ENCODE measurements at regions of chr2 and their contacts with region 1.

Region 1: GRCh38 chr2:166180951-166181812 is 53.4 kb upstream of the SCN1A start:
- DNase-seq: no peak
- H3K4me3 ChIP-seq: no peak overlapping the region
- H3K27me3 ChIP-seq: no peaks in the 10 kb centered on the region
- CTCF ChIP-seq: peak; percentile 70

Region 2: DNA sequence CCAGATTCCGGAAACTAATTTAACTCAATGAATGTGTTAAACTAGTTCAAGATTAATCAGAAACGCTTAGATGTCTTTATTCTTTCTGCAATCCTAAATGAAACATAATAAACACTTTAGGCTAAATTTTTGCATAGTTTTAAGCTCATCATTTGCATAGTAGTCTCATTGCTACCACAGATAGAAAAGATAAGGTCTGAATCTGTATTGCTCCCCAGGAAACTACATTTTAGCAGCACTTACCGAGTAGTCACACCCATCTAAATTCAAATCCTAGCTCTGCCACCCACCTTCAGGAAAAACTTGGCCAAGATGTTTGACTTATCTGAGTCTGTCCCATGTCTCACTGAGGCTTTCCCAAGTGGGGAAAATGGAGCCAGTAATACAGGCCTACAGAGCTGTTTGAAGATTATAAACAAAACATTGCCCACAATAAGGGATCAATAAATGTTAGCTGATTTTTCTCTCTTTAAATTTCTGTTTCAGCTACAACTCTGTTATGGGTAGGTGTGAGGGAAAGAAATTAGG is 474.2 kb before region 1 on chr2:
- CTCF ChIA-PET with region 1: no interaction called
- POLR2A ChIA-PET with region 1: no interaction called
- DNase-seq: no peak
- H3K4me3 ChIP-seq: no peak overlapping the region
- H3K27me3 ChIP-seq: no peaks in the 10 kb centered on the region
- CTCF ChIP-seq: no peak

Region 3: GRCh38 chr2:166193407-166193806 is 12.2 kb after region 1 on chr2:
- CTCF ChIA-PET with region 1: interaction called, 27 read pairs
- POLR2A ChIA-PET with region 1: no interaction called
- DNase-seq: no peak
- H3K4me3 ChIP-seq: no peak overlapping the region
- H3K27me3 ChIP-seq: no peaks in the 10 kb centered on the region
- CTCF ChIP-seq: no peak

Region 4: GRCh38 chr2:166384774-166385173 is 203.6 kb after region 1 on chr2:
- CTCF ChIA-PET with region 1: interaction called, 33 read pairs
- POLR2A ChIA-PET with region 1: no interaction called
- DNase-seq: no peak
- H3K4me3 ChIP-seq: no peak overlapping the region
- H3K27me3 ChIP-seq: no peaks in the 10 kb centered on the region
- CTCF ChIP-seq: peak; percentile 39

Region 5: DNA sequence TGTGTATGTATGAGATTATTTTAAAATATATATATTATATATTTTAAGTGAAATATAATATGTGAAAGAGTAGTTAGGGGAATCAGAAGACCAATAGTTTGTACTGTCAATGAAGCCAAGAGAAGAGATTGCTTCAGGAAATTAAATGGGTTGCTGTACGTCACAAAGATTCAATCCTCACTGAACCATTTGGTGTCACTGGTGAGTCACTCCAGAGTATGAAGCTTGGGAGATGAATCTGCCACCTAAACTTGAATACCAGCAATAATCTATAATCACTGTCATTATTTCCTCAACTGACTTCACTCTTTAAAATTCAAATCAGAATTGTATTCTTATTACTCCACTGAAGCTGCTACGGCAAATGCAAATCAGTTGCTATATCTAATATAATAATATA is 236.5 kb after region 1 on chr2:
- CTCF ChIA-PET with region 1: interaction called, 19 read pairs
- POLR2A ChIA-PET with region 1: no interaction called
- DNase-seq: no peak
- H3K4me3 ChIP-seq: no peak overlapping the region
- H3K27me3 ChIP-seq: no peaks in the 10 kb centered on the region
- CTCF ChIP-seq: peak; percentile 9; the same call in 1 of the 2 replicates

Measured in BJ (cell line).